Naive thymus-derived CD4-positive, alpha-beta T cell (primary cell): ENCODE measurements at regions of chr12 and their contacts with region 1.

Region 1: DNA sequence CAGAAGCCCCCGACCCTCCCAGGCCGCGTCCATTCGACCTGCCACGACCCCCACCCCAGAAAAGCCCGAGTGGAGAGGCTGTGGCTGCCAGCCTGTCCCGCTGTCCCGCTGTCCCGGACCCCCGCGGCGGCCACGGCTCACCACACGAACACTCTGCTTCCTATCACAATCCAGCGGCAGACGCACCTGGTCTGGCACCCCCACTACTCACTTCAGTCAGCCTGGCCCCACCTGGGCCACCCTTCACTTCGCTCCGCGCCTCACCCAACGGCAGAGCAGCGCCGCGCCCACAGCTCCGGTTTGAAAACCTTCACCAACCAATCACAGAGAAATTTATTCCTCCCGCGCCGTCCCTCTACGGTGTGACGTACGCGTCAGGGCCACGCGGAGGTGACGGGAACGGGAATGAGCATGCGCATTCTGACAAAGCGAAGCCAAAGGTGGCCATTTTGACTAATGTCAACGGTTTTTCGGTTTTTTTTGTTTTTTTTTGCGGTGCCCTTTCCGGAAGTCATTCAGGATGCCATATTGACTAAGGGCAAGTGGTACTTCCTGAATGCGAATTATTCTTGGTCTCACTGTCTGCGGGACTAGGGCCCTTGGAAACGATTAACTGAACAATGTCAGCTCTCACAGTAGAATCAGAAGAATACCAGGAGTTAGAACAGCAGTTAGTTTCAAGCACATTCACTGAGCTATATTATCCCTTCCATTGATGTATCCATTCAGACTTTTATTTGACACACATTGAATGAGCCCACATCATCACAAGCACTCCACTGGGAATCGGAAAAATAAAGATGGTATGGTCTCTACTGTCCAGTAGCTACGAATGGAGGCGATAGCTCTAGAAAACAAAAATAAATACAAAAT is at the start of gene RACGAP1:
- DNase-seq: peak; percentile 77 to 98 (median 97)
- ATAC-seq: peak; percentile 99
- H3K4me3 ChIP-seq: peak within 1 kb of the TSS; percentile 81
- H3K4me3 Mint-ChIP-seq: peak within 1 kb of the TSS; percentile 90 to 99 (median 96)
- H3K27ac ChIP-seq: peak within 1 kb of the TSS; percentile 73
- H3K27ac Mint-ChIP-seq: peak within 1 kb of the TSS; percentile 38 to 97 (median 90)
- H3K4me1 ChIP-seq: peaks cover 0 to 12% of the 10 kb centered on the region in 2 donors
- H3K4me1 Mint-ChIP-seq: peaks cover 10 to 43% (median 18%) of the 10 kb centered on the region in 7 donors
- H3K27me3 ChIP-seq: no peaks in the 10 kb centered on the region
- H3K27me3 Mint-ChIP-seq: peaks cover 0 to 3% (median 0%) of the 10 kb centered on the region in 5 donors
- total RNA-seq, gene RACGAP1: 4.2 to 111 (median 8.0) TPM

Region 2: DNA sequence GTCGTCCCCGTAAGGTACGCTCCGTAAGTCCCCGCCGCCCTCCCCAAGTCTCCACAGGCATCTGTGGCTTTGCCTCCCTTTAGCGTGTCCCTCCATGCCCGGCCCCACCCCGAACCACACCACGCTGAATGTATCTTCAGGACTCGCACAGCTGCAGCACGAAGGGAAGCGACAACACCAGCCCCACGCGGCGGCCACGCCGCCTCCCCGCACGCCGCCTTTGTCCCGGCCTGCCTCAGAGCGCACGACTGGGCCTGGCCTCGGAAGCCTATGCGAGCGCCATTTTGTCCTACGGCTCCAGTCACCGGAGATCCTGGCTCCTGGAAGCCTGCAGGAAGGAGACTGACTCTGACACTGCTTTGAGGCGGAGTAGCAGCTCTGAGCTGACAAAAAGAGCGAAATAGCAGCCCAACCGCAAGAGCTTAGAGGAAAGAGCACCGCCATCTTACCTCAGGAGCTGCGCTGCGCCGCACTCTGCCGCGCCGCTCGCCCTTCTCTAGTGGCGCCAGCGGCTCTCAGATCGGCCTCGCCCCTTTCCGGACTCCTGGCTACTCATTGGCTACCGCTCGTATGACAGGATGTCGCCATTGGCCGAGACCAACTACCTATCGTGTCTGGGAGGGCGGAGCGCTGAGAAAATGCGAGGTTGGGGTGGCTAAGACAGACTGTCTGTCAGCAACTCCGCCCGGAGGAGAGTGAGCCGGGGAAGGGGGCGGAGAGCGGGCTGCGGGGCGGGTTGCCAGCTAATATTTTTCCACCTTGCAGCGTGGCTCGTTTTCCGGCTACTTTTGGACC is 1343.5 kb before region 1 on chr12 and contains the start of gene KANSL2:
- CTCF ChIA-PET with region 1: no interaction called
- POLR2A ChIA-PET with region 1: no interaction called
- intact Hi-C with region 1: loop called in 1 of 2 experiments (anchors 5 kb)
- DNase-seq: peak; percentile 79 to 98 (median 96)
- ATAC-seq: peak; percentile 97
- H3K4me3 ChIP-seq: peak within 1 kb of the TSS; percentile 88
- H3K4me3 Mint-ChIP-seq: peak within 1 kb of the TSS; percentile 93 to 99 (median 97)
- H3K27ac ChIP-seq: peak within 1 kb of the TSS; percentile 90
- H3K27ac Mint-ChIP-seq: peak within 1 kb of the TSS; percentile 97 to 99 (median 98)
- H3K4me1 ChIP-seq: peaks cover 30 to 38% of the 10 kb centered on the region in 2 donors
- H3K4me1 Mint-ChIP-seq: peaks cover 32 to 59% (median 53%) of the 10 kb centered on the region in 7 donors
- H3K27me3 ChIP-seq: no peaks in the 10 kb centered on the region
- H3K27me3 Mint-ChIP-seq: no peaks in the 10 kb centered on the region
- total RNA-seq, gene KANSL2: 37.5 to 117 (median 74.4) TPM

Region 3: GRCh38 chr12:49567611-49568441 is 457.6 kb before region 1 on chr12 and contains the start of gene MCRS1:
- CTCF ChIA-PET with region 1: no interaction called
- POLR2A ChIA-PET with region 1: no interaction called
- intact Hi-C with region 1: loop called in 1 of 2 experiments (anchors 1 kb)
- DNase-seq: peak; percentile 89 to 94 (median 91)
- ATAC-seq: peak; percentile 92
- H3K4me3 ChIP-seq: peak within 1 kb of the TSS; percentile 81
- H3K4me3 Mint-ChIP-seq: peak within 1 kb of the TSS; percentile 94 to 100 (median 99)
- H3K27ac ChIP-seq: peak within 1 kb of the TSS; percentile 91
- H3K27ac Mint-ChIP-seq: peak within 1 kb of the TSS; percentile 98 to 100 (median 99)
- H3K4me1 ChIP-seq: peaks cover 33 to 42% of the 10 kb centered on the region in 2 donors
- H3K4me1 Mint-ChIP-seq: peaks cover 45 to 76% (median 61%) of the 10 kb centered on the region in 7 donors
- H3K27me3 ChIP-seq: no peaks in the 10 kb centered on the region
- H3K27me3 Mint-ChIP-seq: peaks cover 0 to 3% (median 0%) of the 10 kb centered on the region in 5 donors
- total RNA-seq, gene MCRS1: 70.0 to 85.2 (median 71.4) TPM

Region 4: DNA sequence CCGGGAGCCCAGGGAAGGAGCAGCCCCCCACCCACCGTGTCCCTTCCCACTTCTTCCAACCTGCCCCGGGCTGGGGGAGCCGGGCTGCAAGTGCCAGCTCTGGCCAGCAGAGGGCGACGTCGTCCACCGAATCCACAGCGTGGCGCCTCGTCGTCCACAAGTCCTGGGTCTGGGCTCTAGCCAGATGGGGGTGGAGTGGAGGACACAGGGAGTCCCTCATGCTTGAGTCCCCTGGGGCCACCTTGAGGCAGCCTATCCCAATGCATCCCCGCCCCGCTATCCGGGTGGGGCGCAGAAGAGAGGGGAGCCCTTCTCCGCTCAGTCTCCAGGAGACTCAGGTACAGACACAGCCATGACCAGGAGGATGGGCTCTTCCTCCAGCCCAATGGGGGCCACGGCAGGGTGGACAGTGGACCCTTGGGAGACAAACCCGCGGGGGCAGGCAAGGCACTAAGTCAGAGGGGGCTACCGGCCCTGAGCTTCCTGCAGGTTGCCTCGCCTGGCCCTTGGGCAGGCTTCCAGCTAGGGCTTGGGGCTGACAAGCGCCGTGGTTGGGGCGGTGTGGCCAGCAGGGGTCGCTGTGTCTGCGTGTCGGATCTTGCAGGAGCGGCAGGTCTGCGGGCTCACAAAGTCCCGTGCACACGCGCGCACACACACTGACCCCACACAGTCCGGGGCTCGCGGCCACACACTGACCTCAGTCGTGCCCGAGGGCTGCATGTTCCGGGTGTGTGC is 58.2 kb before region 1 on chr12:
- CTCF ChIA-PET with region 1: no interaction called
- POLR2A ChIA-PET with region 1: no interaction called
- intact Hi-C with region 1: loop called in 1 of 2 experiments (anchors 1 kb)
- DNase-seq: peak; percentile 81 to 98 (median 93)
- ATAC-seq: peak; percentile 93
- H3K4me3 ChIP-seq: peak overlapping the region; percentile 81
- H3K4me3 Mint-ChIP-seq: peak overlapping the region; percentile 70 to 83 (median 80)
- H3K27ac ChIP-seq: no peak overlapping the region
- H3K27ac Mint-ChIP-seq: peak overlapping the region in 1 of 9 donors; percentile 14
- H3K4me1 ChIP-seq: peaks cover 0 to 9% of the 10 kb centered on the region in 2 donors
- H3K4me1 Mint-ChIP-seq: peaks cover 0 to 12% (median 4%) of the 10 kb centered on the region in 7 donors
- H3K27me3 ChIP-seq: no peaks in the 10 kb centered on the region
- H3K27me3 Mint-ChIP-seq: peaks cover 31 to 41% (median 35%) of the 10 kb centered on the region in 5 donors

Region 5: DNA sequence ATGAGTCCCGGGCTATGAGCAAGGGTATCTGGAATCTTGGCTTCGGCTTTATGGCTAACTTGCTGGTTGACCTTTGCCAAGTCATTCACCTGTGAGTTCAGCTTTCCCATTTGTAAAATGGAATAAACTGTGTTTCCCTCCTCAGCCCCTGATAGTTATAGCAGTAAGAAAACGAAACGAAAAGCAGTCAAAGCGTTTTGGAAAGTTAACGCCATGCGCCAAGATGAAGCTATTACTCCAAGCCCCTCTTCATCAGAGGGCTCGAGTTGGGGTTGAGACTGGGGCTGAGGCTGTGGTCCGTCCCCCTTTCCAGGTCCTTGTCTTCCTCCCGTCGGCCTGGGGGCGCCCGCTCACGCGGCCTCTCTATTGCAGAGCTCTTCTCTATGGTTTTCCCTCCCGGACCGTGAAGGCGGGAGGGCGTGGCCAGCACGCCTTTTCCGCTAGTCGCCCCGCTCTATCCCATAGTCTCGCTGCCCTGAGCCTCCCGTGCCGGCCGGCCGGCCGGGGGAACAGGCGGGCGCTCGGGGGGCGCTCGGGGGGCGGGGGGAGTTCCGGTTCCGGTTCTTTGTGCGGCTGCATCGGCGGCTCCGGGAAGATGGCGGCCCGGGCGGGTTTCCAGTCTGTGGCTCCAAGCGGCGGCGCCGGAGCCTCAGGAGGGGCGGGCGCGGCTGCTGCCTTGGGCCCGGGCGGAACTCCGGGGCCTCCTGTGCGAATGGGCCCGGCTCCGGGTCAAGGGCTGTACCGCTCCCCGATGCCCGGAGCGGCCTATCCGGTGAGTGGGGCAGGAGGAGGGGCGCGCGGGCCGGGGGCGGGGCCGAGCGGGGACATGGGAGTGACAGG is 59.6 kb after region 1 on chr12 and contains the start of gene SMARCD1:
- CTCF ChIA-PET with region 1: interaction called, 3 read pairs
- POLR2A ChIA-PET with region 1: interaction called, 10 read pairs
- intact Hi-C with region 1: loop called (anchors 1 kb)
- DNase-seq: peak; percentile 65 to 85 (median 76)
- ATAC-seq: peak; percentile 92
- H3K4me3 ChIP-seq: peak within 1 kb of the TSS; percentile 82
- H3K4me3 Mint-ChIP-seq: peak within 1 kb of the TSS; percentile 87 to 98 (median 94)
- H3K27ac ChIP-seq: peak within 1 kb of the TSS; percentile 98
- H3K27ac Mint-ChIP-seq: peak within 1 kb of the TSS; percentile 93 to 99 (median 96)
- H3K4me1 ChIP-seq: peaks cover 0 to 5% of the 10 kb centered on the region in 2 donors
- H3K4me1 Mint-ChIP-seq: peaks cover 6 to 46% (median 40%) of the 10 kb centered on the region in 7 donors
- H3K27me3 ChIP-seq: no peaks in the 10 kb centered on the region
- H3K27me3 Mint-ChIP-seq: no peaks in the 10 kb centered on the region
- total RNA-seq, gene SMARCD1: 65.1 to 88.5 (median 67.5) TPM

Region 6: GRCh38 chr12:50157259-50157658 is 131.8 kb after region 1 on chr12:
- CTCF ChIA-PET with region 1: no interaction called
- POLR2A ChIA-PET with region 1: no interaction called
- intact Hi-C with region 1: no loop called
- DNase-seq: no peak
- ATAC-seq: no peak
- H3K4me3 ChIP-seq: no peak overlapping the region
- H3K4me3 Mint-ChIP-seq: no peak overlapping the region
- H3K27ac ChIP-seq: no peak overlapping the region
- H3K27ac Mint-ChIP-seq: peak overlapping the region in 5 of 9 donors; percentile 5 to 54 (median 24)
- H3K4me1 ChIP-seq: no peaks in the 10 kb centered on the region
- H3K4me1 Mint-ChIP-seq: peaks cover 16 to 37% (median 30%) of the 10 kb centered on the region in 7 donors
- H3K27me3 ChIP-seq: no peaks in the 10 kb centered on the region
- H3K27me3 Mint-ChIP-seq: no peaks in the 10 kb centered on the region

Region 7: DNA sequence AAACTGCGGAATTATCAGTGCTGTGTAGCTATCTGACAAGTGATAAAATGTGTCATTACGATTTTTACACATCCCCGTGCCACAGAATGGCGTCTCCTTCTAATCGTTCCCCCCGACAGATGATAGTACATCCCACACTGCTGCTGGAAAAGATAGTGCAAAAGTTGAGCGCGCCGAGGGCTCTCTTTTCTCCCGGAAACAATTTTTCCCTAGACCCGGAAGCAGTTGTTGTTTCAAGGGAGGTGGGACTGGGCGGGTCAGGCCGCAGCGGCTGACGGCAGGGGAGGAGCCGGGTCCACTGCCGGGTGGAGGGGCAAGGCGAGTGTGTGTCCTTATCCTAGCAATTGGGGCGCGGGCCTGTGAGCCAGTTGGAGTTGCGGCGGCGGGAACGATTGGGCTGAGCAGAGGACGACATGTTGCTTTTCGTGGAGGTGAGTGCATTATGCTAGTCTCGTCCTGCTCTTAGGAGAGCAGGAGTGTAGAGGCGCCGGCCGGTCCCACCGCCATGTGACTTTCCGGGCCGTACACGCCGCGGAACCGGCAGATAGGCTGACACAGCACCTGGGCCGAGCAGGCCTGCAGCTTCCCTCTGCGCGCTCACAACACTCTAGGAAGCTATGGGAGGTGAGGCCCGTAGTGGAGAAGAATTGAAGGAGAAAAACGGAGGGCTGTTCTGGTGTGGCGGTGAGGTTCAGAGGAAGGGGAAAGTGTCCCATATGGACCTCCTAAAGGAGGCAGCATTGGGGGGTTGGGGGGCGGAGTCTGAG is 375.4 kb after region 1 on chr12 and contains the start of gene LARP4:
- CTCF ChIA-PET with region 1: no interaction called
- POLR2A ChIA-PET with region 1: no interaction called
- intact Hi-C with region 1: loop called in 1 of 2 experiments (anchors 1 kb)
- DNase-seq: peak; percentile 70 to 92 (median 88)
- ATAC-seq: peak; percentile 98
- H3K4me3 ChIP-seq: peak within 1 kb of the TSS; percentile 66
- H3K4me3 Mint-ChIP-seq: peak within 1 kb of the TSS; percentile 81 to 100 (median 99)
- H3K27ac ChIP-seq: peak within 1 kb of the TSS; percentile 77
- H3K27ac Mint-ChIP-seq: peak within 1 kb of the TSS; percentile 86 to 97 (median 95)
- H3K4me1 ChIP-seq: peaks cover 9 to 12% of the 10 kb centered on the region in 2 donors
- H3K4me1 Mint-ChIP-seq: peaks cover 23 to 55% (median 37%) of the 10 kb centered on the region in 7 donors
- H3K27me3 ChIP-seq: no peaks in the 10 kb centered on the region
- H3K27me3 Mint-ChIP-seq: peaks cover 0 to 13% (median 6%) of the 10 kb centered on the region in 5 donors
- total RNA-seq, gene LARP4: 22.1 to 68.9 (median 38.4) TPM